Activated naive CD4-positive, alpha-beta T cell treated with anti-CD3 and anti-CD28 coated beads for 36 hours (primary cell): ENCODE measurements at regions of chr15 and their contacts with region 1.

Region 1: GRCh38 chr15:55168329-55168974 is 28.3 kb downstream of the RSL24D1 start:
- DNase-seq: peak; percentile 75
- H3K4me3 Mint-ChIP-seq: no peak overlapping the region
- H3K27ac Mint-ChIP-seq: no peak overlapping the region
- H3K4me1 Mint-ChIP-seq: no peaks in the 10 kb centered on the region
- H3K27me3 Mint-ChIP-seq: no peaks in the 10 kb centered on the region

Region 2: GRCh38 chr15:53808058-53808706 is 1360.3 kb before region 1 on chr15:
- CTCF ChIA-PET with region 1: no interaction called
- intact Hi-C with region 1: loop called (anchors 5 kb)
- DNase-seq: no peak
- H3K4me3 Mint-ChIP-seq: no peak overlapping the region
- H3K27ac Mint-ChIP-seq: no peak overlapping the region
- H3K4me1 Mint-ChIP-seq: peaks cover 2% of the 10 kb centered on the region
- H3K27me3 Mint-ChIP-seq: peaks cover 2% of the 10 kb centered on the region

Region 3: GRCh38 chr15:54082836-54083492 is 1085.5 kb before region 1 on chr15:
- CTCF ChIA-PET with region 1: no interaction called
- intact Hi-C with region 1: loop called (anchors 5 kb)
- DNase-seq: no peak
- H3K4me3 Mint-ChIP-seq: no peak overlapping the region
- H3K27ac Mint-ChIP-seq: no peak overlapping the region
- H3K4me1 Mint-ChIP-seq: no peaks in the 10 kb centered on the region
- H3K27me3 Mint-ChIP-seq: peaks cover 12% of the 10 kb centered on the region

Region 4: GRCh38 chr15:55126111-55126510 is 42.3 kb before region 1 on chr15:
- CTCF ChIA-PET with region 1: no interaction called
- intact Hi-C with region 1: no loop called
- DNase-seq: no peak
- H3K4me3 Mint-ChIP-seq: no peak overlapping the region
- H3K27ac Mint-ChIP-seq: no peak overlapping the region
- H3K4me1 Mint-ChIP-seq: no peaks in the 10 kb centered on the region
- H3K27me3 Mint-ChIP-seq: peaks cover 5% of the 10 kb centered on the region